Activated T-helper 1 cell treated with anti-CD3 and anti-CD28 coated beads, Interleukin-12 subunit alpha, Interleukin-12 subunit beta, Interleukin-2, Interleukin-4 antibody, amounts not matched to agents 30 ng/mL and 10 ng/mL and 1 ng/mL, durations not matched to agents 14 hours and 24 hours and 36 hours (primary cell): ENCODE measurements at regions of chr16 and their contacts with region 1.

Region 1: DNA sequence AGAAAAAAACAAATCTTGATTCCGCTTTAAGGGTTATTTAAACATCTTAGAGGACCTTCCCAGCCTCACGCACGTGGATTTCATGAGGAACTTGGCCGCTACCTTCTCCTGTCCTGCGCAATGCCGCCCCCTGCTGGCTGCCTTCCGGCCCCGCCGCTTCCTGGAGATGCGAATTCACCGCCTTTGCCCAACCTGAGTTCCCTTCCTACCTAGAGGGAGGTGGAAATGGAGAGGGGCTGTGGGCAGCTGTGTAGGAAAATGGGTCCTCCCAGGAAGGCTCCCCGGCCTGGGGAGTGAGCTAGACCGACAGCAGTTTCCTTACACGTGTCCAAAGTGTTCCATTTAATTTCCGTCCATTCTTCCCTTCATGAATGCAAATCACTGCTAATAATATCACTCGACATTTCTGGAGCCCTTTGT is 1.0 kb upstream of the ABCC12 start:
- DNase-seq: peak; percentile 66
- H3K4me3 Mint-ChIP-seq: no peak overlapping the region
- H3K27ac Mint-ChIP-seq: peak overlapping the region; percentile 31
- H3K4me1 Mint-ChIP-seq: peaks cover 31% of the 10 kb centered on the region
- H3K27me3 Mint-ChIP-seq: peaks cover 9% of the 10 kb centered on the region

Region 2: GRCh38 chr16:46822270-46822669 is 1334.5 kb before region 1 on chr16:
- intact Hi-C with region 1: loop called (anchors 2 kb)
- DNase-seq: no peak
- H3K4me3 Mint-ChIP-seq: no peak overlapping the region
- H3K27ac Mint-ChIP-seq: no peak overlapping the region
- H3K4me1 Mint-ChIP-seq: peaks cover 34% of the 10 kb centered on the region
- H3K27me3 Mint-ChIP-seq: no peaks in the 10 kb centered on the region

Region 3: DNA sequence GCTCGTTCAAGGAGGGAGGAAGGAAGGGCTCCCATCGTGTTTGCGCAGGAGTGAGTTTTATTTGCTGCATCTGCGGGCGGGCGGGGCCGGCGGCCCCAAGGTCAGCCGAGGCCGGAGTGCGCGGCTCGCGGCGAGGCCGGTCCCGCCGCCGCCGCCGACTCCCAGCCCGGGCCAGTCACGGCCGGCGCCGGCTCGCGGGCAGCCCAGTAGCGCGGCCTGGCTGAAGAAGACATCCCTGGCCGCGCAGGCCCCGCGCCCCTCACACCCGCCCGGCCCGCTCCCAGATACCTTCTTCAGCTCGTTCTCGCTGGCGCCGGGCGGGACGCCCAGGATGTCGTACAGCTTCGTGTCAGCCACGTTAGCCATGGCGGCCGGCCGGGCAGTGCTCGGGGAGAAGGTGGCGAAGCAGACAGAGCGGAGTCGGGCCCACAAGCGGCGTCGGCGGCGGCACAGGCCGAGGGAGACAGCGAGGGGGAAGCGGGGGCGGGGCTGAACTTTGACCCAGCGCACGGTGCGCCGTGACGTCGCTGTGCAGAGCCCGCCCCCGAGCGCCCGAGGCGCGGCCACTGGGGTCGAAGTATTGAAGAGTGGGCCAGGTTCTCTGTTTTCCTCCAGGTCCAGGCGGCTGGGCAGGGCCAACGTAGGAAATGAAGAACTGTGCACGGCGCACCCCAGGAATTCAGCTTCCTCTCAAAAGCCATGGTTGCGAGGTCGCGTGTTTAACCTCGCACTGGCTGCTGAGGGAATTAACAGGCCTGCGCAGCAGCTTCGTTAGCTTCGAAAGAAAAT is 1183.4 kb before region 1 on chr16 and contains the start of gene DNAJA2:
- intact Hi-C with region 1: loop called (anchors 1 kb)
- DNase-seq: peak; percentile 86
- H3K4me3 Mint-ChIP-seq: peak within 1 kb of the TSS; percentile 97
- H3K27ac Mint-ChIP-seq: peak within 1 kb of the TSS; percentile 96
- H3K4me1 Mint-ChIP-seq: peaks cover 47% of the 10 kb centered on the region
- H3K27me3 Mint-ChIP-seq: no peaks in the 10 kb centered on the region
- total RNA-seq, gene DNAJA2: 83.6 and 86.3 TPM in 2 replicates

Region 4: GRCh38 chr16:47110939-47111338 is 1045.9 kb before region 1 on chr16:
- intact Hi-C with region 1: loop called (anchors 1 kb)
- DNase-seq: no peak
- H3K4me3 Mint-ChIP-seq: no peak overlapping the region
- H3K27ac Mint-ChIP-seq: no peak overlapping the region
- H3K4me1 Mint-ChIP-seq: peaks cover 20% of the 10 kb centered on the region
- H3K27me3 Mint-ChIP-seq: no peaks in the 10 kb centered on the region

Region 5: GRCh38 chr16:47732523-47733111 is 424.2 kb before region 1 on chr16:
- intact Hi-C with region 1: loop called (anchors 1 kb)
- DNase-seq: no peak
- H3K4me3 Mint-ChIP-seq: peak overlapping the region; percentile 47
- H3K27ac Mint-ChIP-seq: peak overlapping the region; percentile 87
- H3K4me1 Mint-ChIP-seq: peaks cover 21% of the 10 kb centered on the region
- H3K27me3 Mint-ChIP-seq: no peaks in the 10 kb centered on the region

Region 6: GRCh38 chr16:48452977-48453760 is 296.4 kb after region 1 on chr16:
- intact Hi-C with region 1: loop called (anchors 1 kb)
- DNase-seq: no peak
- H3K4me3 Mint-ChIP-seq: no peak overlapping the region
- H3K27ac Mint-ChIP-seq: no peak overlapping the region
- H3K4me1 Mint-ChIP-seq: peaks cover 5% of the 10 kb centered on the region
- H3K27me3 Mint-ChIP-seq: peaks cover 14% of the 10 kb centered on the region